ENCODE measurements at regions of chr2 and their contacts with region 1.

Region 1: GRCh38 chr2:174697255-174697654 is 67.0 kb downstream of the CHRNA1 start:
- DNase-seq: peak; percentile 80
- H3K4me3 Mint-ChIP-seq: no peak overlapping the region
- H3K27ac Mint-ChIP-seq: no peak overlapping the region
- H3K4me1 Mint-ChIP-seq: no peaks in the 10 kb centered on the region
- H3K27me3 Mint-ChIP-seq: no peaks in the 10 kb centered on the region

Region 2: DNA sequence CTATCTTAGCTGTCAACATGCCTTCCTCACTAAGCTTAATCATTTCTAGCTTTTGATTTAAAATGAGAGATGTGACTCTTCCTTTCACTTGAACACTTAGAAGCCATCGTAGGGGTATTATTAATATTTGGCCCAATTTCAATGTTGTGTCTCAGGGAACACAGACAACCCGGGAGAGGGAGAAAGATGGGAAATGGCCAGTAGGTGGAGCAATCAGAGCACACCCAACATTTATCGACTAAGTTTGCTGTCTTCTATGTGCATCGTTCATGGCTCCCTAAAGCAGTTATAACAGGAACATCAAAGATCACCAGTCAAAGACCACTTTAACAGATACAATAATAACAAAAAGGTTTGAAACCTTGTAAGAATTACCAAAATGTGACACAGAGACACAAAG is 559.1 kb before region 1 on chr2:
- CTCF ChIA-PET with region 1: no interaction called
- intact Hi-C with region 1: no loop called
- DNase-seq: no peak
- H3K4me3 Mint-ChIP-seq: no peak overlapping the region
- H3K27ac Mint-ChIP-seq: no peak overlapping the region
- H3K4me1 Mint-ChIP-seq: no peaks in the 10 kb centered on the region
- H3K27me3 Mint-ChIP-seq: no peaks in the 10 kb centered on the region

Region 3: GRCh38 chr2:174654419-174654941 is 42.8 kb before region 1 on chr2:
- CTCF ChIA-PET with region 1: interaction called, 16 read pairs
- intact Hi-C with region 1: no loop called
- DNase-seq: no peak
- H3K4me3 Mint-ChIP-seq: no peak overlapping the region
- H3K27ac Mint-ChIP-seq: no peak overlapping the region
- H3K4me1 Mint-ChIP-seq: peaks cover 43% of the 10 kb centered on the region
- H3K27me3 Mint-ChIP-seq: no peaks in the 10 kb centered on the region

Region 4: DNA sequence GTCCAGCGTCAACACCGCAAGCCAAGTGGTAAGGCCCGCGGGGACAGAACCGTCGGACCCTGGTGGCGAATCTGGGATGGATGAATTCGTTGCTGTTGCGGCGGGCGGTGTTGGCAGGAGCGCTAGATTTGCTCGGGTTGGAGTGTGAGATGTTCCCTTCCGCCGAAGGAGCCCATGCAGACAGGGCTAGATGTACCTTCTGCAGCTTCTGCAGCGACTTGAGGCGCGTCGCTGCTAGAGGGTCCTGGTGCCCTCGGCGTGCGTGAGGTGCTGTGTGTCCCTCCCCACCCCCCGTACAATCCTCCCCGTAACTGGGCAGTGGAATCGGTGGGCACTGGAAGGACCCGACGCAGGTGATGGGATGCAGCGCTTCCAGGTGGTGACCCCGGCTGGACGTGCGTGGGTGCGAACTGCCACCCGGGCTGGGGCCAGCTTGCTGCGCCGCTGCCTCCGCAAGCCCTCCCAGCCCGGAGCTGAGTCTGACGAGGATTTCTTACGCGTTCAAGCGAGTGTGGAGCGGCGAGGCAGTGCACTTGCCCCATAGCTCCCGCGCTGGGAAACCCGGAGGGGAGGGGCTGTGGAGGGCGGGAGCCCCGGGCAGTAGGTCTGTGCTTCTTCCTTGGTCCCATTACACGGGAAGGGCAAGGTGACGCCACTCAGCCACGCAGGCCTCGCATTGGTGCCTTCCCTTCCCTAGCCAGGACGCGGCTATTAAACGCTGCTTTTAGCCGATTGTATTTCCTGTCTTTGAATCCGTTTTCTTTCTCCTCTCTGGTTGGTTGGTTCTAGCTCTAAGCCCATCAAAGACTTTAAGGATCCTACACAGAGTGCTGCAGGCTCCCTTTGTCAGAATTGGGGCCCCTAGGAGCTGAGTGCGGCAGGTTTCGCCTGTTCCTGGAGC is 32.8 kb after region 1 on chr2:
- CTCF ChIA-PET with region 1: interaction called, 16 read pairs
- intact Hi-C with region 1: loop called (anchors 1 kb)
- DNase-seq: peak; percentile 76
- H3K4me3 Mint-ChIP-seq: peak overlapping the region; percentile 82
- H3K27ac Mint-ChIP-seq: no peak overlapping the region
- H3K4me1 Mint-ChIP-seq: peaks cover 4% of the 10 kb centered on the region
- H3K27me3 Mint-ChIP-seq: peaks cover 4% of the 10 kb centered on the region

Region 5: GRCh38 chr2:174878537-174879147 is 181.4 kb after region 1 on chr2:
- CTCF ChIA-PET with region 1: no interaction called
- intact Hi-C with region 1: no loop called
- DNase-seq: no peak
- H3K4me3 Mint-ChIP-seq: no peak overlapping the region
- H3K27ac Mint-ChIP-seq: no peak overlapping the region
- H3K4me1 Mint-ChIP-seq: no peaks in the 10 kb centered on the region
- H3K27me3 Mint-ChIP-seq: no peaks in the 10 kb centered on the region

Region 6: GRCh38 chr2:174985630-174986029 is 288.4 kb after region 1 on chr2:
- CTCF ChIA-PET with region 1: interaction called, 42 read pairs
- intact Hi-C with region 1: loop called (anchors 1 kb)
- DNase-seq: no peak
- H3K4me3 Mint-ChIP-seq: no peak overlapping the region
- H3K27ac Mint-ChIP-seq: no peak overlapping the region
- H3K4me1 Mint-ChIP-seq: peaks cover 2% of the 10 kb centered on the region
- H3K27me3 Mint-ChIP-seq: no peaks in the 10 kb centered on the region

Region 7: GRCh38 chr2:175282290-175282689 is 585.0 kb after region 1 on chr2:
- CTCF ChIA-PET with region 1: interaction called, 6 read pairs
- intact Hi-C with region 1: loop called (anchors 1 kb)
- DNase-seq: no peak
- H3K4me3 Mint-ChIP-seq: no peak overlapping the region
- H3K27ac Mint-ChIP-seq: no peak overlapping the region
- H3K4me1 Mint-ChIP-seq: no peaks in the 10 kb centered on the region
- H3K27me3 Mint-ChIP-seq: no peaks in the 10 kb centered on the region

Measured in activated naive CD4-positive, alpha-beta T cell treated with anti-CD3 and anti-CD28 coated beads for 36 hours (primary cell).